IMR-90 (cell line): ENCODE measurements at regions of chr9 and their contacts with region 1.

Region 1: DNA sequence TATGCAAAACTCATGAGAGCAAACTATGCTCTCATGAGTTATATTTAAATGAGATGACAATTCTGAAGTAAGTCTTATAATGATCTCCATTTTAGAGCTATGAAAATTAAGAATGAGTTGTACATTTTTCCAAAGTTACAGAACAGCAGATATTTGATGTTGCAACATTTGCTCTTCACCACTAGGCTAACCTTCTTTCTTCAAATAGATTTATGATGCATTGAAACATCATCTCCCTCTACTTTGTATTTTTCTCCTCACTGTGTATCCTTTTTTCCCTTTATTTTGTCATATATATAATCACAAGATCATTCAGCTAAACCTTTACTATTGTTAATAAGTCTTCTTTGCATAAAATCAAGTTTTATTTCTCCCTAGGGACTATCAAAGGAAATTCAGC is 497.7 kb upstream of the TYRP1 start:
- DNase-seq: no peak
- ATAC-seq: no peak
- H3K4me3 ChIP-seq: no peak overlapping the region
- H3K27ac ChIP-seq: no peak overlapping the region
- H3K4me1 ChIP-seq: no peaks in the 10 kb centered on the region
- H3K27me3 ChIP-seq: no peaks in the 10 kb centered on the region
- CTCF ChIP-seq: no peak
- POLR2A ChIP-seq: no peak
- RAD21 ChIP-seq: no peak

Region 2: GRCh38 chr9:12094046-12094445 is 101.4 kb before region 1 on chr9:
- CTCF ChIA-PET with region 1: no interaction called
- POLR2A ChIA-PET with region 1: interaction called, 17 read pairs
- dilution Hi-C with region 1: no loop called
- in situ Hi-C with region 1: no loop called
- intact Hi-C with region 1: no loop called
- DNase-seq: no peak
- ATAC-seq: no peak
- H3K4me3 ChIP-seq: no peak overlapping the region
- H3K27ac ChIP-seq: no peak overlapping the region
- H3K4me1 ChIP-seq: no peaks in the 10 kb centered on the region
- H3K27me3 ChIP-seq: no peaks in the 10 kb centered on the region
- CTCF ChIP-seq: no peak
- POLR2A ChIP-seq: no peak
- RAD21 ChIP-seq: no peak

Region 3: GRCh38 chr9:12230708-12231107 is 35.3 kb after region 1 on chr9:
- CTCF ChIA-PET with region 1: no interaction called
- POLR2A ChIA-PET with region 1: no interaction called
- dilution Hi-C with region 1: no loop called
- in situ Hi-C with region 1: no loop called
- intact Hi-C with region 1: no loop called
- DNase-seq: no peak
- ATAC-seq: no peak
- H3K4me3 ChIP-seq: no peak overlapping the region
- H3K27ac ChIP-seq: no peak overlapping the region
- H3K4me1 ChIP-seq: no peaks in the 10 kb centered on the region
- H3K27me3 ChIP-seq: no peaks in the 10 kb centered on the region
- CTCF ChIP-seq: no peak
- POLR2A ChIP-seq: no peak
- RAD21 ChIP-seq: no peak